ENCODE measurements at regions of chr7 and their contacts with region 1.

Region 1: GRCh38 chr7:15418264-15418663 is 143.6 kb downstream of the AGMO start:
- DNase-seq: no peak
- ATAC-seq: no peak
- H3K4me3 ChIP-seq: no peak overlapping the region
- H3K27ac ChIP-seq: no peak overlapping the region
- H3K4me1 ChIP-seq: no peaks in the 10 kb centered on the region
- H3K27me3 ChIP-seq: no peaks in the 10 kb centered on the region
- CTCF ChIP-seq: no peak
- POLR2A ChIP-seq: no peak
- RAD21 ChIP-seq: no peak

Region 2: GRCh38 chr7:15389073-15389472 is 29.2 kb before region 1 on chr7:
- CTCF ChIA-PET with region 1: no interaction called
- POLR2A ChIA-PET with region 1: no interaction called
- dilution Hi-C with region 1: no loop called
- in situ Hi-C with region 1: no loop called
- intact Hi-C with region 1: loop called (anchors 1 kb)
- DNase-seq: no peak
- ATAC-seq: no peak
- H3K4me3 ChIP-seq: no peak overlapping the region
- H3K27ac ChIP-seq: no peak overlapping the region
- H3K4me1 ChIP-seq: no peaks in the 10 kb centered on the region
- H3K27me3 ChIP-seq: no peaks in the 10 kb centered on the region
- CTCF ChIP-seq: no peak
- POLR2A ChIP-seq: no peak
- RAD21 ChIP-seq: no peak

Measured in IMR-90 (cell line).